Heart left ventricle (tissue), 16 donors: ENCODE measurements at regions of chr3 and their contacts with region 1.

Region 1: DNA sequence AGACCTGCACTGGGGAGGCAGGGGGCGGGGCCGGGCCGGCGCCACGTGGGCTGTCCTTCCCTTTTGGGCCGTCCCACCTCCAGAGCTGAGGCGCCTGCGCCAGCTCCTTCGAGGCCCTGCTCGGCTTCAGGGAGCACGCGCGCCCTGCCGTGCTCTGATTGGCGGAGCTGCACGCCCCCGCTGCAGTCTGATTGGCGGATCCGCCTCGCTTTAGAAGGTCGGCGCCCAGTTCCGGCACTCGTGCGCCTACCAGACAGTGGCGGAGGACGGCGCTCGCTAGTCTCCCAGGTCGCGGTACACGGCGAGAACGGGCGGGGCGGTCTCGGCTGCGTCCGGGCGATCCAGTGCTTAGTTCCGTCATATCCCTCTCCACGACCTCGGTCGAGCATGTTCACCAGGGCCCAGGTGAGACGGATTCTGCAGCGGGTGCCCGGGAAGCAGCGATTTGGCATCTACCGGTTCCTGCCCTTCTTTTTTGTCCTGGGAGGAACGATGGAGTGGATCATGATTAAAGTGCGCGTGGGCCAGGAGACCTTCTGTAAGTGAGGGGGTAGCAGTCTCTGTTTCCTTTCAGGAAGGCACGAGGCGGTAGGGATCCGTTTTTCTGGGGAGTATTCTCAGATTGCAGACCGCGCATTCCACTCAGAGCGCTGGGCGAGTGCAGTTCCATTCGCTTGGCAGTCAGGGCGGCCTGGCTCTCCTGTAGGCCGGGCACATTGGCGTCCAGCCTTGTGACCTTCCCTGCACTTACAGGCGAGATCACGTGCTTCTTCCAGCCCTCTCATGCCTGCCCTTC is at the start of gene UQCC5:
- DNase-seq: peak; percentile 98 to 99 (median 99)
- ATAC-seq: peak; percentile 88 to 95 (median 94)
- H3K4me3 ChIP-seq: peak within 1 kb of the TSS; percentile 47 to 88 (median 72)
- H3K27ac ChIP-seq: peak within 1 kb of the TSS; percentile 85 to 97 (median 94)
- H3K4me1 ChIP-seq: peaks cover 4 to 81% (median 54%) of the 10 kb centered on the region in 12 donors
- H3K27me3 ChIP-seq: no peaks in the 10 kb centered on the region
- CTCF ChIP-seq: peak in 4 of 12 donors; percentile 6 to 32 (median 23)
- POLR2A ChIP-seq: peak; percentile 96 to 100
- total RNA-seq, gene UQCC5: 2.0 to 73.0 (median 59.2) TPM

Region 2: DNA sequence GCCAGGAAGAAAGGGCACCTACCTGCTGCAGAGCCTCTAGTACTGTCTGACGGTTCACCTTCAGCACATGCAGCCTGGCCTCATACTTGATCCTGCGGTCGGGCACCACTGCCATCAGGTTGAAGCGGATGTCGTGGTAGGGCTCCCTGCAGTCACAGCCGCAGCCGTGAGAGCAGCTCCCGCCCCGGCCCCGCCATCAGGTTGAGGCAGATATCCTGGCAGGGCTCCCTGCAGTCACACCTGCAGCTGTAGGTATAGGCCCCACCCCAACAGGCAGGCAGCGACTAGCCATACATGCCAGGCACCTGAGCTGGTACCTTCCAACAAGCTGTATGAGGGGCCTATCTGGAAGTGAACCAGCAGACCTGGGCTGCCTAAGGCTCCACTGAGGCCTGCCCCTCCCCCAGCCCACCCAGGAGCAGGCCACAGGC is 130.3 kb before region 1 on chr3:
- intact Hi-C with region 1: no loop called
- DNase-seq: peak in 3 of 5 donors; percentile 20 to 55 (median 21)
- ATAC-seq: no peak
- H3K4me3 ChIP-seq: no peak overlapping the region
- H3K27ac ChIP-seq: no peak overlapping the region
- H3K4me1 ChIP-seq: peaks cover 0 to 29% (median 19%) of the 10 kb centered on the region in 12 donors
- H3K27me3 ChIP-seq: no peaks in the 10 kb centered on the region
- CTCF ChIP-seq: no peak
- POLR2A ChIP-seq: no peak

Region 3: GRCh38 chr3:52455283-52456168 is 81.0 kb before region 1 on chr3 and contains the start of gene NISCH:
- intact Hi-C with region 1: loop called in 1 of 10 experiments (anchors 5 kb)
- DNase-seq: peak; percentile 92 to 96 (median 94)
- ATAC-seq: peak; percentile 13 to 59 (median 36)
- H3K4me3 ChIP-seq: peak within 1 kb of the TSS; percentile 57 to 92 (median 81)
- H3K27ac ChIP-seq: peak within 1 kb of the TSS; percentile 85 to 99 (median 94)
- H3K4me1 ChIP-seq: peaks cover 0 to 39% (median 23%) of the 10 kb centered on the region in 12 donors
- H3K27me3 ChIP-seq: no peaks in the 10 kb centered on the region
- CTCF ChIP-seq: peak in 1 of 12 donors; percentile 6
- POLR2A ChIP-seq: peak in 1 of 2 donors; percentile 66
- total RNA-seq, gene NISCH: 29.5 to 56.2 (median 43.9) TPM

Region 4: GRCh38 chr3:52471371-52472238 is 65.0 kb before region 1 on chr3:
- intact Hi-C with region 1: loop called in 6 of 10 experiments (anchors 2 to 5 kb)
- DNase-seq: peak; percentile 79 to 87 (median 82)
- ATAC-seq: peak; percentile 77 to 87 (median 82)
- H3K4me3 ChIP-seq: no peak overlapping the region
- H3K27ac ChIP-seq: peak overlapping the region in 4 of 12 donors; percentile 18 to 60 (median 48)
- H3K4me1 ChIP-seq: peaks cover 0 to 64% (median 29%) of the 10 kb centered on the region in 12 donors
- H3K27me3 ChIP-seq: no peaks in the 10 kb centered on the region
- CTCF ChIP-seq: peak; percentile 68 to 83 (median 78)
- POLR2A ChIP-seq: no peak

Region 5: DNA sequence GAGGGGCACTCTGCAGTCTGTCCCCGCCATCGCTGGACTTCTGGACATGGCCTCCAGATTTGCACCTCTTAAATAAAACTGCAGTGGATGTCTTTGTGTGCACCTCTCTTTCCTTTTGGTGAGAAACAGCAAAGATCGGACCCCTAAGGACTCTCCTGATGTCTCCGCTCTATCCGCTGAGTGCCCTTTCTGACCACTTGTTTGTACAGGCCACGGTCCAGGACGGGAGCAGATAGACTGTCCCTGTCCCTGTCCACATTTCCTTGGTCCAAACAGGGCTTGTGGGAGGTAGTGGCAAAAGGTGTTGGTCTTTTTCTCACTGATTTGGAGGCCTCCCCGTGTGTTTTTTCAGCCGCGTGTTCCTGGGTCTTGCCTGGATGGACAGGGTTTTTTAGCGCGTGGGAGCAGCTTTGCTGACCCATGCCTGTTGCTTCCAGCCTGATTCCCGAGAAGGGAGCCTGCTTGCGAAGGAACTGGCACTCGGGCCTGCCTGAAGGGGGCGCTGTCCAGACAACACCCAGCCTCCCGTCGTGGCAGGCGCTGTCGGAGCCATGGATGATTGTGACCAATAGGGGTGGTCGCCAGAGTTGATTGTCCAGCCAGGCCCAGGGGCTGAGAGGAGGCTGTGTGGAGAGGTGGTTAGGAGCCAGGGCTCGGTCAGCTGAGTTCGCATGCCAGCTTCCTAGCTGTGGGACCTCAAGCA is 54.6 kb before region 1 on chr3:
- intact Hi-C with region 1: loop called in 2 of 10 experiments (anchors 5 kb)
- DNase-seq: peak in 2 of 5 donors; percentile 40 to 60
- ATAC-seq: no peak
- H3K4me3 ChIP-seq: no peak overlapping the region
- H3K27ac ChIP-seq: no peak overlapping the region
- H3K4me1 ChIP-seq: peaks cover 5 to 37% (median 24%) of the 10 kb centered on the region in 12 donors
- H3K27me3 ChIP-seq: no peaks in the 10 kb centered on the region
- CTCF ChIP-seq: peak in 9 of 12 donors; percentile 17 to 47 (median 34)
- POLR2A ChIP-seq: no peak

Region 6: GRCh38 chr3:52498137-52499054 is 38.2 kb before region 1 on chr3:
- intact Hi-C with region 1: loop called in 1 of 10 experiments (anchors 5 kb)
- DNase-seq: peak; percentile 46 to 79 (median 64)
- ATAC-seq: peak in 3 of 4 donors; percentile 28 to 48 (median 36)
- H3K4me3 ChIP-seq: peak overlapping the region in 3 of 12 donors; percentile 1 to 69 (median 64)
- H3K27ac ChIP-seq: peak overlapping the region in 5 of 12 donors; percentile 23 to 94 (median 34)
- H3K4me1 ChIP-seq: peaks cover 0 to 66% (median 16%) of the 10 kb centered on the region in 12 donors
- H3K27me3 ChIP-seq: no peaks in the 10 kb centered on the region
- CTCF ChIP-seq: no peak
- POLR2A ChIP-seq: no peak

Region 7: GRCh38 chr3:52685709-52686691 is 149.4 kb after region 1 on chr3 and contains the starts of genes GNL3 and PBRM1:
- intact Hi-C with region 1: loop called in 1 of 10 experiments (anchors 5 kb)
- DNase-seq: peak; percentile 94 to 96 (median 95)
- ATAC-seq: peak; percentile 87 to 95 (median 92)
- H3K4me3 ChIP-seq: peak within 1 kb of the TSS; percentile 55 to 91 (median 84)
- H3K27ac ChIP-seq: peak within 1 kb of the TSS; percentile 91 to 99 (median 98)
- H3K4me1 ChIP-seq: peaks cover 12 to 64% (median 42%) of the 10 kb centered on the region in 12 donors
- H3K27me3 ChIP-seq: no peaks in the 10 kb centered on the region
- CTCF ChIP-seq: no peak
- POLR2A ChIP-seq: peak in 1 of 2 donors; percentile 87
- total RNA-seq, gene GNL3: 23.6 to 47.4 (median 29.4) TPM
- total RNA-seq, gene PBRM1: 33.8 to 61.7 (median 49.5) TPM